ENCODE measurements at regions of chr3 and their contacts with region 1.

Region 1: DNA sequence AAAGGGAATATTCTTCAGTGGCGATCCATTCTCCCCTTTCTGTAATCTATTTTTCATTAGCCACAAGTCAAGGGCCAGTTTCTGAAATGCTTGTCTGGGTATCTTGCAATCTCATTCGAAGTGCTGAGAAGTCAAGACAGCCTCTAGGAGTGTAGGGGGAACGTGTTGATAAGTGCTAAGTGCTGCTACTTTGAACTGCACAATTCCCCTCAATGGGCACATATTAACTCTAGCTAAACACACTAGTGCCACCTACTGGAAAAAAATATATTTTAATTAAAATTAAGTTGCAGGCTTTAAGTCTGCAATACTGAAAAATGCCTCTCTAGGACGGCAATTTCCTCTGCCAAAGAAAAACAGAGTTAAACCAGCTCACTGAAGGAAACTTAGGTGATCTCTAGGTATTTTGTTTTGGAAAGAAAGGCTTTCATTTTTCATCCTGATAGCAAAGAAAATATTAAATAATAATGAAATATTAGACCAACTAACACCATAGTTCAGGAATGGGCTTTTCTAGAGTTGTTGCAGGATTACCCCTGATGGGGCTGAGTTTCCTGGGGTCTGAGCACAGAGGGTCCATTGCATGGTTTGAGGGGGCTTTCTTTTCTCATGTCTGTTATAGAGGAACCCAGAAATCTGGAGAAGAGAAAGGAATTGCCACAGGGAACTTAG is 181.9 kb upstream of the KBTBD8 start:
- DNase-seq: no peak
- ATAC-seq: peak; percentile 89 to 95
- H3K4me3 ChIP-seq: no peak overlapping the region
- H3K27ac ChIP-seq: no peak overlapping the region
- H3K4me1 ChIP-seq: peaks cover 0 to 6% of the 10 kb centered on the region in 2 donors
- H3K27me3 ChIP-seq: no peaks in the 10 kb centered on the region
- CTCF ChIP-seq: peak; percentile 61 to 77 (median 65)
- POLR2A ChIP-seq: no peak

Region 2: DNA sequence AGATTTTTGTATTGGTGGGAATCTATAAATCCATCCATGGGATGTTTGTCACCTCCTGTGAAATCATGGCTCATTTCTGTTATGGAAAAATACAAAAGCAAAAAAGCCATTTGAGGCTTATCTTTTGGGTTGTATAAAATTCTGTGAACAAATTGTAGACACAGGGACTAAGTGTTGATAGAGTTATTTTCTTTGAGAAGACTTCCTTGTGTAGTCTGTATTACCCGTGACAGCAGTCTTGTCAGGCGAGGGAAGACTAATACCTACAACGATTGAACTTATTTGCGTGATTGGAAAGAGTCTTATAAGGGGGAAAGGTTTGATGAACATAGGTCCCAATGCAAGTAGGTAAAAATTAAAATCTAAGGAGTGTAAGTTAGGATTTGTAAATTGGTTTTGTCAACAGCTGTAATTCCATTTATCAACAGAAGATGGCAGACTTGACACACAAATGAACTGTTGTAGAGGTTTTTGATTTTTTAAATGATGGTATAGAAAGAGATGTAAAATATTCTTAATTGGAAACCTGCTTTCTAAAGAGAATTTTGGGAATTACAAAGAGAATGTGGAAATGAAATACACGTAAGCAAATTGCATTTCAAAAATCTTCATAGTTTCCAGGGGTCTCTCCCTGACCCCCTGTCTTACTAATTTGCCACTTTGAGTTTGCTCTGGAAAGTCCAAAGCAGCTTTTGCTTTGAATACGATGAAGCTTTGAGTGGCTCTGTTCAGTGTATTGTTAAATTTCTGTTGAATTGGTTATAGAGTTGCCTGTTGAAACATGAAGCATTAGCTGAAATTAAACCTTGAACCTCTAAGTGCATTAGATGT is 562.2 kb before region 1 on chr3:
- in situ Hi-C with region 1: no loop called
- intact Hi-C with region 1: loop called (anchors 2 kb)
- DNase-seq: no peak
- ATAC-seq: peak in 1 of 2 donors; percentile 16
- H3K4me3 ChIP-seq: no peak overlapping the region
- H3K27ac ChIP-seq: no peak overlapping the region
- H3K4me1 ChIP-seq: no peaks in the 10 kb centered on the region
- H3K27me3 ChIP-seq: no peaks in the 10 kb centered on the region
- CTCF ChIP-seq: peak; percentile 69 to 78 (median 71)
- POLR2A ChIP-seq: no peak

Region 3: DNA sequence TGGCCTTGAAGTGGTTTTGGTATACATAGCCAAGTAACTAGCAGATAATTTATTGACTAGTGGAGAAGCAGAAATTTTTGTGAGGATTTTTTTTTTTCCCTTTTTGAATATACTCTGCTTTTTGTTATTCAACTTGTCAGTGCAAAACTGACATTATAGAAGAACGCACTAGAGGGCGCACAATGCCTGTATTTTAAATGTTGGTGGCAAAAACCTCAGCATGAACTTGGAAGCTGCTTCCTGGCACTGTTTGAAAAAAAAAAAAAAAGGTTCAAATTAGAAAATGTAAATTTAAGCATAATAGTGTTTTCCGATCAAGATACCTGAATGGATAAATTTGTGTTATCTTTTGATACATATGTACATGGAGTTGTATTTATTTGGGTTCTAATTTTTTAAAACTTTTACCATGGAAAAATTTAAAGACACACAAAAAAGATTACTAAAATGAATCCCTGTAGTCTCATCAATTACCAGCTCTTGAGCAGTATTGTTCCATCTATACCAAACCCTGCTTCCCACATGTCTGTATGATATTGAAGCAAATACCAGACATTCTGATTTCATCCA is 539.4 kb before region 1 on chr3:
- in situ Hi-C with region 1: loop called (anchors 5 kb)
- intact Hi-C with region 1: no loop called
- DNase-seq: peak; percentile 13 to 33
- ATAC-seq: peak in 1 of 2 donors; percentile 76
- H3K4me3 ChIP-seq: no peak overlapping the region
- H3K27ac ChIP-seq: no peak overlapping the region
- H3K4me1 ChIP-seq: peaks cover 10 to 12% of the 10 kb centered on the region in 2 donors
- H3K27me3 ChIP-seq: no peaks in the 10 kb centered on the region
- CTCF ChIP-seq: peak; percentile 41 to 72 (median 62)
- POLR2A ChIP-seq: no peak

Region 4: GRCh38 chr3:66398246-66399034 is 417.8 kb before region 1 on chr3:
- in situ Hi-C with region 1: loop called (anchors 5 to 10 kb)
- intact Hi-C with region 1: no loop called
- DNase-seq: peak; percentile 52 to 67
- ATAC-seq: peak; percentile 68 to 72
- H3K4me3 ChIP-seq: no peak overlapping the region
- H3K27ac ChIP-seq: peak overlapping the region; percentile 38 to 87 (median 78)
- H3K4me1 ChIP-seq: peaks cover 60 to 72% of the 10 kb centered on the region in 2 donors
- H3K27me3 ChIP-seq: no peaks in the 10 kb centered on the region
- CTCF ChIP-seq: no peak
- POLR2A ChIP-seq: peak in 1 of 2 donors; percentile 17

Region 5: GRCh38 chr3:66407611-66408218 is 408.5 kb before region 1 on chr3:
- in situ Hi-C with region 1: loop called (anchors 5 to 10 kb)
- intact Hi-C with region 1: loop called (anchors 1 kb)
- DNase-seq: peak; percentile 57 to 84
- ATAC-seq: peak; percentile 32 to 61
- H3K4me3 ChIP-seq: no peak overlapping the region
- H3K27ac ChIP-seq: peak overlapping the region; percentile 77 to 92 (median 80)
- H3K4me1 ChIP-seq: peaks cover 60 to 68% of the 10 kb centered on the region in 2 donors
- H3K27me3 ChIP-seq: no peaks in the 10 kb centered on the region
- CTCF ChIP-seq: peak; percentile 91 to 98 (median 96)
- POLR2A ChIP-seq: no peak

Region 6: DNA sequence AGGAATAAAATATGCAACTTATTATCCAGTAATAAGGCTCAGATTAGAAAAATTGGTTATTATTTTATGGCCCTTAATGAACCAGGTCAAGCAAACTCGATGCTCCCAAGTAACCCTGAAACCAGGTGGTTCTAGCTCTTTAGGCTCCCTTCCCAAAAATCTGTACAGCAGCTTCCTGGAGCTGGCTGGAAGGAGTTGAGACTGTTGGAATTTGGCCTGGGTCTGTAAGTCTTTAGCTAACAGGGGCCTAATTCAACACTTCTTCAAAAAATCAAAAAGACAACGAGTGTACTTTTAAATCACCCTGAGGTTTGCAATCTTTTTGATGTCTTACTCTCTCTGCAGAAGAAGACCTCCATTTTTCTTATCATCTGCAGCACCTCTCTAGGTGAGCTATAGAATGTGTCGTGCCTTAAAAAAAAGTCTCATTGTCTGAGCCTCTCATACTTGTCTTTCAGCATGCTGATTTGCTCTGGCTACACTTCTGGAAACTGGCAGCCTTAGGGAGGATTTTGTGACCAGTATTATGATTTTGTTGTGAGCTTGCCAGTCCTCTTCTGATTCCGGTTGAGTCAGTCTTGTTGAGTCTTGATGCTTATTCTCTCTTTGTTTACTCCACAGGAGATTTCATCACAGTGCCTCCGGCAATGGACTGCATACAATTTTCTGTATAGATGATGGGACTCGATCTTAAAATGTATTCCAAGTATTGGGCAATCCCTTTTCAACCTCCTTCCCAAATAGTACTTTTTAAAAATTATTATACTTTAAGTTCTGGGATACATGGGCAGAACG is 53.1 kb before region 1 on chr3:
- in situ Hi-C with region 1: no loop called
- intact Hi-C with region 1: loop called (anchors 5 kb)
- DNase-seq: peak; percentile 56 to 66
- ATAC-seq: peak; percentile 89 to 94
- H3K4me3 ChIP-seq: no peak overlapping the region
- H3K27ac ChIP-seq: peak overlapping the region; percentile 33 to 87 (median 82)
- H3K4me1 ChIP-seq: peaks cover 29 to 33% of the 10 kb centered on the region in 2 donors
- H3K27me3 ChIP-seq: no peaks in the 10 kb centered on the region
- CTCF ChIP-seq: no peak
- POLR2A ChIP-seq: no peak

Measured in gastrocnemius medialis (tissue), 4 donors.